ENCODE measurements at regions of chr22 and their contacts with region 1.

Region 1: GRCh38 chr22:34105461-34106062 is 185.3 kb upstream of the LARGE1 start:
- DNase-seq: peak; percentile 51 to 67
- H3K4me3 ChIP-seq: no peak overlapping the region
- H3K27ac ChIP-seq: no peak overlapping the region
- H3K4me1 ChIP-seq: no peaks in the 10 kb centered on the region
- H3K27me3 ChIP-seq: peaks cover 0 to 6% of the 10 kb centered on the region in 2 donors
- CTCF ChIP-seq: peak; percentile 46 to 55

Region 2: DNA sequence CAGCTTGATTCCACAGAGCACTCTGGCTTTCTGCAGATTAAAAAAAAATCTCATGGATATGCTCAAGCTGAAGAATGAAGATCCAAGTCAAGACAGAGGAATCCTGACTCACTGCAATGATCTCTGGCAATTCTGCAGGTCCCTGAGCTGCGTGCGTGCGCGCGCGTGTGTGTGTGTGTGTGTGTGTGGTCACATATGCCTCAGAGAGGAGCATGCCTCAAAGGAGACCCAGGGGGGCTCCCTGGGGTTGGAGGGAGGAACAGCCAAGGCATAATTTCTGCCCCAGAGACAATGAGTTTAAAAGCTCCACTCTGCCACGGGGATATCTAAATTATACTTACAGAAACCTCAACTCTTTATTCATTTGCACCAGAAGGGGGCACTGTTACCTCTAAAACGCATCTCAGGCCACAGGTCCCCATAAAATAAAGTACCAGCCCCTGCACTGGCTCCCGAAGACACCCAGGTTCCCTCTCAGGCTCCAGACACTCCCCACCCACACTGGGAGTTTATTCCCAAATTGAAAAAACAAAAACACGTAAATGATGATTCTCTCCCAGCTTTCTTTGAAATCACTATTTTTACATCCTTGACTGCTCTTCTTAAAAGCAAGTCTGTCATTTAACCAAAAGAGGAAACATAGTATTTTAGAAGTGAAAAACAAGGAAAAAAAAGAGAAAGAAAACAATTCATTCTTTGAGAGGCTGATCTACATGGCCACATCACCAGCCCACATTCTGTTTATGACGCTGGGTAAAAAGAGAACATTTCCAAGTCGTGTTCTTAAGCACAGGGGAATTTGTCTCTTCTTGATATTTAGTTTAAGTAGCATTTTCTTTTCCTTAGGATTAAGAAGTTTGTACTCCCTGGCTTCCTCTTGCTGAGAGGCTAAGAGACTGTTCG is 586.2 kb before region 1 on chr22:
- intact Hi-C with region 1: loop called (anchors 5 kb)
- DNase-seq: no peak
- H3K4me3 ChIP-seq: no peak overlapping the region
- H3K27ac ChIP-seq: no peak overlapping the region
- H3K4me1 ChIP-seq: peaks cover 0 to 7% (median 4%) of the 10 kb centered on the region in 4 donors
- H3K27me3 ChIP-seq: no peaks in the 10 kb centered on the region
- CTCF ChIP-seq: peak; percentile 55 to 63

Measured in tibial artery (tissue), 4 donors.